WTC11 (cell line): ENCODE measurements at regions of chr1 and their contacts with region 1.

Region 1: DNA sequence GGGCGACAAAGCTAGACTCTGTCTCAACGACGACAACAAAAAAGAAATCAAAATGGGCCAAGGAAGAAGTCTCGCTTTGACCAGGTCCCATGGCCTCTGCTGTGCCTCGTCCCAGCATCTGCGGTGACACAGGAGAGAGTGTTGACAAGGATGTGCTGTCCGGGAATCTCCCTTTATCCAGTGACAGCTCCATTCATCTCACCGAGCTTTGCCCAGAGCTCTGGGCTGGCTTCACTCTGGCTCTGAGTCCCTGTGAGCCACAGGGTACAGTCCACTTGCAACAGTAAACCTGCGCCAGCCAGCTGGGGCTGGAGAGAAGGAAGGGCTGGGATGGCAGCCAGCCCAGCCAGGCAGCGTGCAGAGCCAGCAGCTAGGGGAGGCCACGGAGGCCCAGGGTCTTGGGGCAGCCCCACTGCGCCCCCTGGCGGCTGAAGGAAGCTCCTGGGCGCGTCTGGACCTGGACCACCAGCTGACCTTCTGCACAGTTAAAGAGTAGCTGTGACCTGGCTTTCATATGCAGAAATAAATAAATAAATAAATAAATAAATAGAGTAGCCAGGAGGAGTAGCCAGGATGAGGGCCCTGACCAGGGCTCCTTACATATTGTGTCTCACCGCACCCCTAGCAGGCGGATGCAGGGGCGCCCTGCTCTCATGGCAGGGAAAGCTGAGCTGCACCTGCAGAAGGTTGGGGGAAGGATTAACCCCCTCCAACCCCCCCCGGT is 29.7 kb downstream of the ENO1 start:
- DNase-seq: peak; percentile 91
- ATAC-seq: peak; percentile 94
- H3K4me3 Mint-ChIP-seq: no peak overlapping the region
- H3K27ac Mint-ChIP-seq: no peak overlapping the region
- H3K4me1 Mint-ChIP-seq: peaks cover 10% of the 10 kb centered on the region; the same call in 1 of the 2 replicates
- H3K27me3 Mint-ChIP-seq: no peaks in the 10 kb centered on the region
- CTCF ChIP-seq: peak; percentile 97

Region 2: DNA sequence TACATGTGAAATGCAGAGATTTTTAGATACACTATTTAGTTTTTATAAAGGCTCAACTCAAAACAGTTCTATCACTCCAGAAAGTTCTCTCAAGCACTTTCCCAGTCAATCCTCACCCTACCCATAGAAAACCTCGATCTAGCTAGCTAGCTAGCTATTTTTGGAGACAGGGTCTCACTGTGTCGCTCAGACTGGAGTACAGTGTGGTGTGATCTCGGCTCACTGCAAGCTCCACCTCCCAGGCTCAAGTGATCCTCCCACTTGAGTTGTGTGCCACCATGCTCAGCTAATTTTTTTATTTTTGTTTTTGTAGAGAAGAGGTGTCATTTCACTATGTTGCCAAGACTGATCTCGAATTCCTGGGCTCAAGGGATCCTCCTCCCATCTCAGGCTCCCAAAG is 268.3 kb before region 1 on chr1:
- CTCF ChIA-PET with region 1: no interaction called
- POLR2A ChIA-PET with region 1: no interaction called
- DNase-seq: no peak
- ATAC-seq: no peak
- H3K4me3 Mint-ChIP-seq: no peak overlapping the region
- H3K27ac Mint-ChIP-seq: peak overlapping the region; percentile 88
- H3K4me1 Mint-ChIP-seq: peaks cover 30% of the 10 kb centered on the region
- H3K27me3 Mint-ChIP-seq: no peaks in the 10 kb centered on the region
- CTCF ChIP-seq: no peak

Region 3: GRCh38 chr1:8702850-8703810 is 145.7 kb before region 1 on chr1:
- CTCF ChIA-PET with region 1: interaction called, 13 read pairs
- POLR2A ChIA-PET with region 1: no interaction called
- DNase-seq: peak; percentile 87
- ATAC-seq: peak; percentile 86
- H3K4me3 Mint-ChIP-seq: peak overlapping the region; percentile 92
- H3K27ac Mint-ChIP-seq: peak overlapping the region; percentile 95
- H3K4me1 Mint-ChIP-seq: peaks cover 65% of the 10 kb centered on the region
- H3K27me3 Mint-ChIP-seq: no peaks in the 10 kb centered on the region
- CTCF ChIP-seq: no peak

Region 4: GRCh38 chr1:8740034-8740449 is 108.8 kb before region 1 on chr1:
- CTCF ChIA-PET with region 1: interaction called, 21 read pairs
- POLR2A ChIA-PET with region 1: no interaction called
- DNase-seq: no peak
- ATAC-seq: no peak
- H3K4me3 Mint-ChIP-seq: no peak overlapping the region
- H3K27ac Mint-ChIP-seq: no peak overlapping the region
- H3K4me1 Mint-ChIP-seq: no peaks in the 10 kb centered on the region
- H3K27me3 Mint-ChIP-seq: no peaks in the 10 kb centered on the region
- CTCF ChIP-seq: no peak

Region 5: GRCh38 chr1:8780405-8780804 is 68.4 kb before region 1 on chr1:
- CTCF ChIA-PET with region 1: interaction called, 18 read pairs
- POLR2A ChIA-PET with region 1: no interaction called
- DNase-seq: no peak
- ATAC-seq: no peak
- H3K4me3 Mint-ChIP-seq: no peak overlapping the region
- H3K27ac Mint-ChIP-seq: peak overlapping the region; percentile 47; the same call in 1 of the 2 replicates
- H3K4me1 Mint-ChIP-seq: peaks cover 37% of the 10 kb centered on the region
- H3K27me3 Mint-ChIP-seq: no peaks in the 10 kb centered on the region
- CTCF ChIP-seq: no peak

Region 6: DNA sequence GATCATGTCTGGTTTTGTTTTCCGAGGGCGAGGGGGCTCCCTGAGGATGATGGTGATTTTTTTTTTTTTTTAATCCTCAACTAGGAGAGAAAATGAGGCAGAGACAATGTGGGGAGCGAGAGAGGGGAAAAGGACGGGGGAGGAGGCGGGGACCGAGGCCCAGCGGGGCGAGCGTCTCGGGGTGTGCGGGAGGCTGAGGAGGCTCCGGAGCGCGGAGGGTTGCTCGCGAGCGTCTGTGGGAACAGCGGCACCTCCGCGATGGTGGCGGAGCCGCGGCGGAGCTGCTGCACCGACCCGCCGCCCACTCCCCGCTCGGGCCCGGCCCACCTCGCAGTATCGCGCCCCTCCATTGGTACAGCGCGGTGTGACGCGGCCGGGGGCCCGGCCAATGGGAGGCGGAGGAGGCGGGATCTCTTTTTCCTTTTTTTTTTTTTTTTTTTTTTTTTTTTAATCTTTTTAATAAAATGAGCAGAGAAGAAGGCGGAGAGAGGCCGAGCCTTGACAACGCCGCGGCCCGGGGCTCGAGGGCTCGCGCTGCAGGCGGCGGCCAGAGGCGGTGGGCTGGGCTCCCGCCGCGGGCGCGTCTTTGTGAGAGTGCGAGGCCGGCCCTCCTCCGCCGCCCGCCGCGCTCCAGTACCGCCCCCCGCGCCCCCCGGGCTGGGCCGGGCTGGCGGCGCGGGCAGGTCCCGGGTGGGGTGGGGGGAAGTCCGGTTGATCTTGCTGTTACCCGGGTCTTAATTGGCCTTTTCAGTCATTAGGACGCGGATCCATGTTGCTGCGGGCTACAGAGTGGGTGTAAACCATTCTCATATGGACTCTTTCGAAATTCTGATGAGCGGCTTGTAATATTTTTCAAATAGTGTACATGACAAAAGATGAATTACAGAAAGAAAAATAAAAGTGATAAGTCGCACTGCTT is 31.2 kb before region 1 on chr1 and contains the start of gene RERE:
- CTCF ChIA-PET with region 1: interaction called, 50 read pairs
- POLR2A ChIA-PET with region 1: no interaction called
- DNase-seq: peak; percentile 91
- ATAC-seq: peak; percentile 89
- H3K4me3 Mint-ChIP-seq: peak within 1 kb of the TSS; percentile 91
- H3K27ac Mint-ChIP-seq: peak within 1 kb of the TSS; percentile 99
- H3K4me1 Mint-ChIP-seq: peaks cover 53% of the 10 kb centered on the region
- H3K27me3 Mint-ChIP-seq: no peaks in the 10 kb centered on the region
- CTCF ChIP-seq: no peak
- total RNA-seq, gene RERE: 122 to 161 TPM (median 124 TPM) in 3 replicates

Region 7: DNA sequence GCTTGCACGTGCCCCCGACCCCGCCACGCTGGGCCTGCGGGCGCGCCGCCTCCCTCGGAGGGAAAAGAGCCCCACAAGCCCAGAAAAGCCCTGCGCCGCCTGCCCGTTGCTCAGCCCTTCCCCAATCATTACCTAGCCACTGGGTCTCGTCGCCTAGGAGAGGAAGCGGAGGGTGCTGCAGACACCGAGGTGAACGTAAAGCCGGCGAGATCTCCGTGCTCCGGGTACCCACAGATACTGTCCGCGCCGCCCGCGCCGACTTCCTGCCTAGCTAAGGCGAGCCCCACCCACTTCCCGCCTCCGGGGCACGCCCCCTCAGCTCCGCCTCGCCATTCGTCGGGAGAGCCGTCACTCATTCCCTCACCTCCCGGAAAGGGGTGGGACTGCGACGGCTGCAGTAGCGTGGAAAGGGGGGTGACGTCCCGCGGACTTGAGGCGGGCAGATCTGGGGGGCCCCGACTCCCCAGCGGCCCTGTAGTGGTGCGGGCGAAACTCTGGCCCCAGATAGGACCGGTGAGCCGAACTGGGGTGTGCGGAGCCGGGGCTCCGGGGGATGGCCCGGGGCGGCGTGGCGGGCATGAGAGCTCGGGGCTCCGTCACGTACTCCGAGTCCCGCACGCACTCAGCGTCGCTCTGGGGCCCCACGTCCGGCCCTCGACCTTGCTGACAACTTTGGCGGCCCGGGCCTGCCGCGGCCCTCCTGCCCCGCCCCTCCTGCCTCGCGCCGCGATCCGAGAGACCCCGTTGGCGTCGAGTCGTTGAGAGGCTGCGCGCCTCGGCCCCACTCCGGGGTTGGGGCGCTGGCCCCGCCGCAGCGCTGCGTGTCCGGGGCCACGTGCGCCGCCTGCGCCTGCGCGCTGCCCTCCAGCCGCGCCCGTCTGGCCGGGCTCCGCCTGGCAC is 29.9 kb after region 1 on chr1 and contains the start of gene ENO1:
- CTCF ChIA-PET with region 1: interaction called, 15 read pairs
- POLR2A ChIA-PET with region 1: no interaction called
- DNase-seq: peak; percentile 96
- ATAC-seq: peak; percentile 79
- H3K4me3 Mint-ChIP-seq: peak within 1 kb of the TSS; percentile 92
- H3K27ac Mint-ChIP-seq: peak within 1 kb of the TSS; percentile 92
- H3K4me1 Mint-ChIP-seq: peaks cover 50% of the 10 kb centered on the region
- H3K27me3 Mint-ChIP-seq: peaks cover 14% of the 10 kb centered on the region
- CTCF ChIP-seq: no peak
- total RNA-seq, gene ENO1: 1,978 to 2,328 TPM (median 2,316 TPM) in 3 replicates